Activated CD4-positive, alpha-beta memory T cell treated with anti-CD3 and anti-CD28 coated beads for 36 hours (primary cell): ENCODE measurements at regions of chr16 and their contacts with region 1.

Region 1: GRCh38 chr16:50024684-50025536 is at the start of gene CNEP1R1:
- DNase-seq: peak; percentile 96
- H3K4me3 Mint-ChIP-seq: peak within 1 kb of the TSS; percentile 91
- H3K27ac Mint-ChIP-seq: peak within 1 kb of the TSS; percentile 83
- H3K4me1 Mint-ChIP-seq: peaks cover 19% of the 10 kb centered on the region
- H3K27me3 Mint-ChIP-seq: no peaks in the 10 kb centered on the region
- total RNA-seq, gene CNEP1R1: 23.9 to 24.5 TPM

Region 2: DNA sequence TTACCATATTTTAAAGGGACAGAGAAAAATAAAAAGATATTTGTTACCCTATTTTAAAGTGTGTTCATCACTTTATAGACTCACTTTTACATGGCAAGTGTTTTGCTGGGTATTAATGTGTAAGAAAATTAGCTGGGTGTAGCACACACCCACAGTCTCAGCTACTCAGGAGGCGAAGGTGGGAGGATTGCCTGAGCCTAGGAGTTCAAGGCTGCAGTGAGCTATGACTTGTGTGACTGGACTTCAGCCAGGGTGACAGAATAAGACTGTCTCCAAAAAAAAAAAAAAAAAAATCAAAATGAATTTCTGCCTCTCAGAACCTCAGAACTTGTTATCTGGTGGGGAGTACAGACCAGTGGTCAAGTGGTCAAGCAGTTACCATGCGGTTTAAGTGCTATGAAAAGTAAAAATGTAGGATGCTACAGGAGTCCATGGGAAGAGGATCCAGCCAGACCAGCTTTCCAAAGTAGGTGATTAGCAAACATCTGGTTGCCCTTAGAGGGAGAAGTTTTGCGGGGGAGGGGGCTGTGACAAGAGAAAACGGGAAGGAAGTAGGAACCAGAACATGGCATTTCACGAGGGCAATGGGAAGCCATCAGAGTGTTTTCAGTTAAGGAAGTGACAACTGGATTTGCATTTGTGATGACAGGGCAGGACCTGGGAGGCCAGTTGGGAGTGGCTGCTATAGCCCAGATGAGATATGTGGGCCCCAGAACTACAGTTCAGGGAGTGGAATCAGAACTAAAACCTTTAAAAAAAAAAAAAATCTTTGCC is 14.0 kb after region 1 on chr16:
- CTCF ChIA-PET with region 1: interaction called, 12 read pairs
- POLR2A ChIA-PET with region 1: no interaction called
- intact Hi-C with region 1: no loop called
- DNase-seq: no peak
- H3K4me3 Mint-ChIP-seq: no peak overlapping the region
- H3K27ac Mint-ChIP-seq: no peak overlapping the region
- H3K4me1 Mint-ChIP-seq: peaks cover 4% of the 10 kb centered on the region
- H3K27me3 Mint-ChIP-seq: no peaks in the 10 kb centered on the region

Region 3: DNA sequence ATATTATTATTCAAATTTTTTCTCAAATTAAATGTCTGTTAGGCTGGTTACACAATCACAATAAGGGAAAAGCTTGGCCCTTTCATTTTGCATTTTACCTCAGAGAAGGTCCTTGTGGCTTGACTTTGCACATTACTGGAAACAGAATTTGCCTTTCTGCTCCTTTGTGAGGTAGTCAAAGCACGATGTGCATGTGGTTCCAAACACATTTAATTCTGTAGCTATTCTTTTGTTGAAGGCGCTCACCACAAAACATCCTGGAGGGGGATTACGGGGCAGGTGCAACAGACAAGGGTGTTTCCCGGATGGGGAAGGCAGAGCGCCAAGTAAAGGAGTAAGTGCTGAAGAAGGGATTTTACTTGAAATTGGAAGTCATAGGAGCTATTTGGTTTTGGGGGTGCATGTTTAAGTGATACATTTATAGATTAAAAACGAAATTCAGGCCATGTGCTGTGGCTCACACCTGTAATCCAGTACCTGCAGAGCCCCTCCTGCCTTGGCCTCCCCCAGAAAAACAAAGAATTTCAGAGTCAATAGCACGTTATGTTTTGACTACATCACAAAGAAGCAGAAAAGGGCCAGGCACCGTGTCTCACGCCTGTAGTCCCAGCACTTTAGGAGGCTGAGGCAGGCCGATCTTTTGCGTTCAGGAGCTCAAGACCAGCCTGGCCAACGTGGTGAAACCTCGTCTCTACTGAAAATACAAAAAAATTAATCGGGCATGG is 97.0 kb after region 1 on chr16:
- CTCF ChIA-PET with region 1: interaction called, 6 read pairs
- POLR2A ChIA-PET with region 1: no interaction called
- intact Hi-C with region 1: loop called (anchors 1 kb)
- DNase-seq: peak; percentile 81
- H3K4me3 Mint-ChIP-seq: no peak overlapping the region
- H3K27ac Mint-ChIP-seq: peak overlapping the region; percentile 10
- H3K4me1 Mint-ChIP-seq: peaks cover 15% of the 10 kb centered on the region
- H3K27me3 Mint-ChIP-seq: no peaks in the 10 kb centered on the region

Region 4: DNA sequence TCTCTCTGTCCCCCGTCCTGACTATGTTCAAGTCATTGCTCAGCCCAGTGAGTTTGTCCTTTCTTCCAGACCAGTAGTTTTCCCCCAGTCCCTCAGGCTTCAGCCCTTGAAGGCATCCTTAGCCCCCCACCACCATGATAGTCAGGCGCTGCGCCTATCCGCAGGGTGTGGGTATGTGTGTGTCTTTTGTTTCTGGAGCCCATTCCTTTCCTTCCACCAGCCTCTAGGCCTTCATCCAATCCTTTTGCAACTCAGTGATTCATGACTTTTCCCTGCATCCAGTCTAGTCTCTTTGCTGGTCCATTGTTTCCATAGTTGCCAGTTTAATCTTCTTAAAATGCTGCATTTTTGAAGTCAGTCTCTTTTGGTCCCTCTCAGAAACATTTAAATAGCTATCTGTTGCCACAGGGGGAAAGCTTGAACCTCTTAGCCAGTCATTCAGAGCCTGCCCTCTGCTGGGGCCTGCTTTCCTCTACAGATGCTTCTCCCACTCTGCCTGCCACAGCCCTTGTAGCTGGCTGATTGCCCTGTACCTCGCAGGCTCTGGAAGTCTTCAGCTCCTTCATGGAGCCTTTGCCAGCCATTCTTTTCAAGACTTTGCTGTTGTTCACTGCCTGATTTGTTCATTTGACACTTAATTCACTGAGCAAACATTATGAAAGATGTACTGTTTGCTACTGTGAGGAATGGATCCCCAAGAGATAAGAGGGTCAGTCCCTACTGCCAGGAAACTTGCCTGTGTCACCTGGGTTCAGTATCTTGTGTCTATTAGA is 185.5 kb after region 1 on chr16:
- CTCF ChIA-PET with region 1: interaction called, 174 read pairs
- POLR2A ChIA-PET with region 1: interaction called, 6 read pairs
- intact Hi-C with region 1: loop called (anchors 1 kb)
- DNase-seq: peak; percentile 80
- H3K4me3 Mint-ChIP-seq: no peak overlapping the region
- H3K27ac Mint-ChIP-seq: peak overlapping the region; percentile 46
- H3K4me1 Mint-ChIP-seq: peaks cover 17% of the 10 kb centered on the region
- H3K27me3 Mint-ChIP-seq: no peaks in the 10 kb centered on the region

Region 5: DNA sequence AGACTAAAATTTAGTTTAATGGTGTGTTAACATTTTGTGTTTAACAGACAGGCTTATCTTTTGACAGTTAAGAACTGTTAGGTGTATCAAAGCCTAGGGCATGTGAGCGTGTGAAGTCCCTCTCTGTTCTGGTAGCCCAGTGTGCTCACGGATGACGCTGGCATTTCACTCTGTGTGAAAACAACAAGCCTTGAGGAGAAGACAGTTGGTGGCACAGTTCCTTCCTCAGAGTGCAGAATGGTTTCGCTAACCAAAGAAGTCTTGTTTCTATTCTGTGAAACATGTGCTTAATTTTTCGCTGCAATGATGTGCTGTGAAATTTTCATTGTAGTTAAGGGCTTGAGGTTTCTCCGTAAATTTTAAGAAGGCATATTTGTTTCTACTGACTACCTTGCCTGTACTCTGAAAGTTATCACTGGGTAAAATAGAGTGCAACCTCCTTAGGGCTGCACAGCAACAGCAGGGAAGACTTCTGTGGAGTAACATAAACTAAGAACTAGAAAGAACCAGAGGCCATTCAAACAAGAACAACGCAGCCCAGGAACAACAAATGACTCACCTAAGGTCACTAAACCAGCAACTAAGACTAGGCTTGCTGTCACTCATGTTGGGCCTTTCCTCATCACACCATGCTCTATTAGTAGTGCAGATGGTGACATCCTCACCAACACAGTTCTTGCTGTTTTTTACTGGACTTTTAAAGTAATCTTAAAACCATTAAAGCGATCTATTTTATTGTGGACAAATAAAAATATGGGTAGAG is 310.5 kb after region 1 on chr16:
- CTCF ChIA-PET with region 1: interaction called, 9 read pairs
- POLR2A ChIA-PET with region 1: interaction called, 3 read pairs
- intact Hi-C with region 1: loop called (anchors 10 kb)
- DNase-seq: peak; percentile 70
- H3K4me3 Mint-ChIP-seq: peak overlapping the region; percentile 32
- H3K27ac Mint-ChIP-seq: peak overlapping the region; percentile 90
- H3K4me1 Mint-ChIP-seq: peaks cover 68% of the 10 kb centered on the region
- H3K27me3 Mint-ChIP-seq: no peaks in the 10 kb centered on the region

Region 6: DNA sequence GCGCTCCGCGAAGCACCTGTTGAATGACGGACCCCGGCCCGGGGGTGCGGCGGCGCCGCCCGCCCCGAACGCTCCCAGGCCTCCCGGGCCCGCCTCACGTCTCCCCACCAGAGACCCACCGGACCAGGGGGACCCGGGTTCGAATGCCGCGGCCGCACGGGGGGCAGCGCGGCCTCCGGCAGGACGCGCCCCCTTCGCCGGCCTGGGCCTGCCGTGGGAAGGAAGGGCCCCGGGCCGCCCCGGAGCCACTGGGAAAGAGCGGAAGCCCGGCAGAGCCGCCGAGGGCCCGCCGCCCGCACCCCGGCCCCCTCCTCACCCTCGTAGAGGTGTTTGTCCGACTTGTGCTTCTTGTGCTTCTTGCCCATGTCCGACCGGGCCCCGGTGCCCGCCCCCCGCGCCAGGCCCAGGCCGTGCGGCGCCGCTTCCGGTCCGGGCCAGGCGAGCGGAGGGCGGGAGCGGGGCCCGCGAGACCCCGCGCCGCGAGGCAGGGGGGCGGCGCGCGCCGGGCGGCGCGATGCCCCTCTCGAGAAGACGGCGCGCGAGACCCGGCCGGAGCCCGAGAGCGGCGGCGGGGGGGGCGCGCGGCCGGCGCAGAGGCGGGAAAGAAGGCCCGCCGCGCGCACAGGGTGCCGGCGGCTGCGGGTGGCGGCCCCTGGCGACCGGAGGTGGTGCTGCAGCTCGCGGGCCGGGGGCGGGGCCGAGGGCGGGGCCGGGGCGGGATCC is 343.7 kb after region 1 on chr16 and contains the start of gene BRD7:
- CTCF ChIA-PET with region 1: interaction called, 9 read pairs
- POLR2A ChIA-PET with region 1: interaction called, 3 read pairs
- intact Hi-C with region 1: loop called (anchors 5 kb)
- DNase-seq: peak; percentile 80
- H3K4me3 Mint-ChIP-seq: peak within 1 kb of the TSS; percentile 89
- H3K27ac Mint-ChIP-seq: peak within 1 kb of the TSS; percentile 80
- H3K4me1 Mint-ChIP-seq: peaks cover 45% of the 10 kb centered on the region
- H3K27me3 Mint-ChIP-seq: no peaks in the 10 kb centered on the region
- total RNA-seq, gene BRD7: 87.9 to 103 TPM